Esophagus muscularis mucosa (tissue), 4 donors: ENCODE measurements at regions of chr12 and their contacts with region 1.

Region 1: GRCh38 chr12:93595351-93595750 is 22.9 kb downstream of the SOCS2 start:
- DNase-seq: no peak
- H3K4me3 ChIP-seq: peak overlapping the region in 3 of 4 donors; percentile 6 to 10 (median 6)
- H3K27ac ChIP-seq: peak overlapping the region in 1 of 4 donors; percentile 74
- H3K4me1 ChIP-seq: peaks cover 0 to 18% (median 9%) of the 10 kb centered on the region in 4 donors
- H3K27me3 ChIP-seq: no peaks in the 10 kb centered on the region
- CTCF ChIP-seq: no peak
- EP300 ChIP-seq: no peak
- POLR2A ChIP-seq: no peak

Region 2: GRCh38 chr12:93670104-93670503 is 74.8 kb after region 1 on chr12:
- intact Hi-C with region 1: loop called (anchors 5 kb)
- DNase-seq: peak; percentile 21
- H3K4me3 ChIP-seq: no peak overlapping the region
- H3K27ac ChIP-seq: no peak overlapping the region
- H3K4me1 ChIP-seq: peaks cover 0 to 5% (median 0%) of the 10 kb centered on the region in 4 donors
- H3K27me3 ChIP-seq: no peaks in the 10 kb centered on the region
- CTCF ChIP-seq: no peak
- EP300 ChIP-seq: no peak
- POLR2A ChIP-seq: no peak